ENCODE measurements at regions of chr1 and their contacts with region 1.

Region 1: GRCh38 chr1:116485071-116485735 is 85.6 kb downstream of the CD58 start:
- DNase-seq: peak; percentile 82
- CTCF ChIP-seq: peak; percentile 98

Region 2: GRCh38 chr1:116110567-116111523 is 374.4 kb before region 1 on chr1 and contains the start of gene MAB21L3:
- CTCF ChIA-PET with region 1: interaction called, 13 read pairs
- POLR2A ChIA-PET with region 1: no interaction called
- DNase-seq: peak; percentile 61
- CTCF ChIP-seq: no peak

Region 3: GRCh38 chr1:116139592-116140134 is 345.5 kb before region 1 on chr1:
- CTCF ChIA-PET with region 1: interaction called, 254 read pairs
- POLR2A ChIA-PET with region 1: no interaction called
- DNase-seq: no peak
- CTCF ChIP-seq: no peak

Region 4: DNA sequence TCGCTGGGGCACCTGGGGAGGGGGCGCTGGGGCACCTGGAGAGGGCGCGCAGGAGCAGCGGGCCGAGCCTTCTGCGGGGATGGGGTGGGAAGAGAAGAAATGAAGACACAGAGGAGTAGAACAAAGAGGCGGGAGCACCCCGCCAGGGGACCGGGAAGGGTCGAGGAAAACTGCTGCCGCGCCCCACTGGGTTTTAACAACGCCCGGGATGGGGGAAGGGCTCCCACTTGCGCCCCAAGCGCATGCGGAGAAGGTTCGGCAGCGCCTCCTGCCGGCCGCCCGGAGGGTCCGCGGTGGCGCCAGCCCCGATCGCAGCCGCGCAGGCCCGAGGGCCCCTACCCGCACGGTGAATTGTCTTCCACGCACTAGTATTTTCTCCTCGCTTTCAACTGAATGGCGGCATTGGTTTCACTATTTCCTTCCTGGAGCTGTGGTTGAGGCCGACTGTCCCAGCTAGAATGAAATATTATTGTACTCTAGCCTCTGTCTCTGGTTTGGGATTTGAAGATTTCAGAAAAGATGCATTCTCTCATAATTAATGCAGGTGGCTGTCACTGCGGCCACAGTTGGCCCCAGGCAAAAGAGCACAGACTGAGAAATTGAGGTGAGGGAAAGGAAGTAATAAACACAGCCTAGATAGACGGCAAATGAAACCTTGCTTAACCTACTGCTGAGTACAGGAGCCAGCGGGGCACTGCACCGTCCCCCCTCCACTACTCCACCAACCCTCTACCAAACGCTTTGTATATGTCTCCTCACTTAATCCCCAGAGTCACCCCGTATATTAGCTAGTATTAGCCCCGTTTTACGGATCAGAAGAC is 316.7 kb before region 1 on chr1:
- CTCF ChIA-PET with region 1: interaction called, 33 read pairs
- POLR2A ChIA-PET with region 1: no interaction called
- DNase-seq: peak; percentile 89
- CTCF ChIP-seq: peak; percentile 96

Region 5: GRCh38 chr1:116372587-116373444 is 112.4 kb before region 1 on chr1 and contains the start of gene ATP1A1:
- CTCF ChIA-PET with region 1: interaction called, 48 read pairs
- POLR2A ChIA-PET with region 1: interaction called, 3 read pairs
- DNase-seq: peak; percentile 98
- CTCF ChIP-seq: no peak

Region 6: GRCh38 chr1:116429821-116430374 is 55.3 kb before region 1 on chr1:
- CTCF ChIA-PET with region 1: interaction called, 18 read pairs
- POLR2A ChIA-PET with region 1: no interaction called
- DNase-seq: no peak
- CTCF ChIP-seq: no peak

Region 7: GRCh38 chr1:116472431-116472961 is 12.7 kb before region 1 on chr1:
- CTCF ChIA-PET with region 1: interaction called, 79 read pairs
- POLR2A ChIA-PET with region 1: no interaction called
- DNase-seq: no peak
- CTCF ChIP-seq: no peak

Measured in GM10248 (cell line).